Heart right ventricle (tissue), 16 donors: ENCODE measurements at regions of chr2 and their contacts with region 1.

Region 1: GRCh38 chr2:166384774-166385173 is 9.0 kb upstream of the SCN9A start:
- DNase-seq: no peak
- ATAC-seq: no peak
- H3K4me3 ChIP-seq: no peak overlapping the region
- H3K27ac ChIP-seq: no peak overlapping the region
- H3K4me1 ChIP-seq: no peaks in the 10 kb centered on the region
- H3K27me3 ChIP-seq: no peaks in the 10 kb centered on the region
- CTCF ChIP-seq: peak; percentile 15 to 62 (median 47)

Region 2: GRCh38 chr2:166335284-166335683 is 49.5 kb before region 1 on chr2:
- intact Hi-C with region 1: no loop called
- DNase-seq: no peak
- ATAC-seq: no peak
- H3K4me3 ChIP-seq: no peak overlapping the region
- H3K27ac ChIP-seq: no peak overlapping the region
- H3K4me1 ChIP-seq: no peaks in the 10 kb centered on the region
- H3K27me3 ChIP-seq: no peaks in the 10 kb centered on the region
- CTCF ChIP-seq: no peak

Region 3: DNA sequence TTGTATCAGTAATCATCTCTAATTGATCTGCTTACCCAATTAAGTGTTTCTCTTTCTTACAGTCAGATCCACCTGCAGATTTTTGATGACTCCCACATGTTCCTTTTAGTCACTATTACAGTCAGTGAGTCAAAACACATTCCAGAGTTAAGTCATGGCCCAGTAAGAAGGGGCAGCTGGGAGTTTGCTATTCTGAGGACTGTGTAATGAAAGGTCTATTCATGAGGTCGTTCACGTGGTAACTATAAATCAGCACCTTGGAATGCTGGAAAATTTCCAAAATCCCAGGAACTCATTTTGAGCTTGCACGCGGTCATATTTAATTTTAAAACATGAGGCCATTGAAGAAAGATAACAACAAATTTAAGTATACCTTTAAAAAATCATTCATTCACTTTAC is 756.0 kb after region 1 on chr2:
- intact Hi-C with region 1: loop called in 1 of 10 experiments (anchors 5 kb)
- DNase-seq: peak in 1 of 2 donors; percentile 61
- ATAC-seq: peak; percentile 85 to 99 (median 97)
- H3K4me3 ChIP-seq: peak overlapping the region in 1 of 10 donors; percentile 12
- H3K27ac ChIP-seq: peak overlapping the region in 6 of 10 donors; percentile 9 to 85 (median 78)
- H3K4me1 ChIP-seq: peaks cover 0 to 20% (median 7%) of the 10 kb centered on the region in 9 donors
- H3K27me3 ChIP-seq: no peaks in the 10 kb centered on the region
- CTCF ChIP-seq: no peak